ENCODE measurements at regions of chr12 and their contacts with region 1.

Region 1: GRCh38 chr12:47715393-47715876 is 9.6 kb upstream of the RPAP3 start:
- DNase-seq: peak; percentile 74 to 88 (median 82)
- ATAC-seq: peak; percentile 45 to 51 (median 48)
- H3K4me3 ChIP-seq: no peak overlapping the region
- H3K27ac ChIP-seq: peak overlapping the region in 11 of 12 donors; percentile 3 to 95 (median 88)
- H3K4me1 ChIP-seq: peaks cover 7 to 52% (median 44%) of the 10 kb centered on the region in 12 donors
- H3K27me3 ChIP-seq: no peaks in the 10 kb centered on the region
- CTCF ChIP-seq: peak; percentile 73 to 89 (median 80)
- POLR2A ChIP-seq: no peak

Region 2: GRCh38 chr12:47657565-47657964 is 57.9 kb before region 1 on chr12:
- intact Hi-C with region 1: no loop called
- DNase-seq: no peak
- ATAC-seq: no peak
- H3K4me3 ChIP-seq: no peak overlapping the region
- H3K27ac ChIP-seq: no peak overlapping the region
- H3K4me1 ChIP-seq: peaks cover 0 to 4% (median 2%) of the 10 kb centered on the region in 12 donors
- H3K27me3 ChIP-seq: no peaks in the 10 kb centered on the region
- CTCF ChIP-seq: no peak
- POLR2A ChIP-seq: no peak

Region 3: GRCh38 chr12:47734725-47735480 is 19.5 kb after region 1 on chr12:
- intact Hi-C with region 1: loop called in 5 of 10 experiments (anchors 1 to 2 kb)
- DNase-seq: peak in 3 of 5 donors; percentile 37 to 70 (median 66)
- ATAC-seq: peak in 1 of 4 donors; percentile 2
- H3K4me3 ChIP-seq: no peak overlapping the region
- H3K27ac ChIP-seq: peak overlapping the region in 10 of 12 donors; percentile 32 to 91 (median 86)
- H3K4me1 ChIP-seq: peaks cover 29 to 86% (median 65%) of the 10 kb centered on the region in 12 donors
- H3K27me3 ChIP-seq: no peaks in the 10 kb centered on the region
- CTCF ChIP-seq: no peak
- POLR2A ChIP-seq: no peak

Region 4: DNA sequence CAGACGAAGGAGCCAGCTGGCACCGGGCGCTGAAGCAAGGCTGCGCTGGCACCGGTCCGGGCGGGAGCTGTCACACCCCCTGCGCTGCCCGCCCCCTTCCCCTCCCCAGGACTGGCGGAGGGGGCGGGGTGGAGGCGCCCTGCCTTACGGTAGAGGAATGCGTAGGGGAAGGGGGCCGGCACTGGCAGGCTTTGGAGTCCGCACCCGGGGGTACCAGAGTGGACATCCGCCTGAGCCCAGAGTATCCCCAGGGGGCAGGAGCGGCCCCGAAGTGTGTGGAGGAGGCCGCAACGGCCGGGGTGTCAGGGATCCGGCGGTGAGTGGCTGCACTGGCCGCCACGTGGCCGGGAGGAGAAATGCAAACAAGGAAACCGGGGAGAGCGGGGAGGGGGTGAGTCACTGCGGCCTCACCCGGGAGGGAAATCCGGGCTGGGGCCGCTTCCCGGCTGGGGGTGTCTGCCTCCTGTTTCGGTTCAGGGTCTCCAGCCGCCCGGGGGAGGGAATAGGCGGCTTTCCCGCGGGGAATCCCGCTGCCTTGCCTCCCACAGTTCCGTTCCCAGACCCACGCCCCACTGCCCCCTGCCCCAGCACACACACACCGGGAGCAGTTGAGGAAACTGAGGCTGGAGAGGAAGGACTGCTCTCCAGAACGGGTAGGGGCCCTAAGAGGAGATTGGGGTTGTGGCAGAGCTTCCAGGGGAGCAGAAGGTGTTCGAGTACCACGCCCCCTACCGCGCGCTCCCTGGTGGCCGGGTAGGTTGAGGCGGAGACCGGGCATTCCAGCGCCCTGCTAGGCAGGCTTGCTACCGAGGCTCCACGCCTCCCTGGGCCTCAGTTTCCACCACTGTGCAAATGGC is 43.6 kb after region 1 on chr12 and contains the start of gene RAPGEF3:
- intact Hi-C with region 1: loop called in 5 of 10 experiments (anchors 1 to 5 kb)
- DNase-seq: peak; percentile 89 to 93 (median 91)
- ATAC-seq: peak; percentile 76 to 90 (median 88)
- H3K4me3 ChIP-seq: peak within 1 kb of the TSS; percentile 42 to 76 (median 64)
- H3K27ac ChIP-seq: peak within 1 kb of the TSS; percentile 64 to 90 (median 82)
- H3K4me1 ChIP-seq: peaks cover 4 to 70% (median 47%) of the 10 kb centered on the region in 12 donors
- H3K27me3 ChIP-seq: no peaks in the 10 kb centered on the region
- CTCF ChIP-seq: peak; percentile 27 to 62 (median 50)
- POLR2A ChIP-seq: peak in 1 of 2 donors; percentile 7
- total RNA-seq, gene RAPGEF3: 14.5 to 47.8 (median 23.9) TPM

Region 5: DNA sequence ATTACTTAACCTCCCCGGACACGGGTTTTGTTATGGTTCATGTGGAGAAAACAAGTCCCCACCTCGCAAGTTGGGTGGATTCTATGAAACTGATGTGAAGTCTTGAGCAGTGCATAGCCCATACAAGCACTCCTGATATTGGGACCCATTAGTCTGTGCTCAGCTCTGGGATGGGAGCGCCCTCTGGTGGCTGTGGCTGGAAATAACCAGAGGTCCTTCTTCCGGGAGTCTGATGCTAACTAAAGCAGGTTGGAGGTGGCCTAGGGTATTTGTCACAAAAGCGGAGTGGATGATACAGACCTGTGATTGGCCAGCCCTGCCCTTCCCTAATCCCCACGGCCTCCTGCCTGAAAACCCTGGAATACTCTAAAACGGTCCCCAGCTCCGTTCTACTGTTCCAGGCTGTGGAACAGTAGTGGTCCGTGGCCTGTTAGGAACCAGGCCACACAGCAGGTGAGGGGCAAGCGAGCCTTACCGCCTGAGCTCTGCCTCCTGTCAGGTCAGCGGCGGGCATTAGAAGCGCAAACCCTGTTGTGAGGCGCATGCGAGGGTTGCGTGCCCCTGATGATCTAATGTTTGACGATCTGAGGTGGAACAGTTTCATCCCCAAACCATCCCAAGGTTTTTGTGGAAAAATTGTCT is 64.0 kb after region 1 on chr12:
- intact Hi-C with region 1: loop called in 5 of 10 experiments (anchors 1 to 2 kb)
- DNase-seq: peak; percentile 84 to 94 (median 86)
- ATAC-seq: peak; percentile 53 to 80 (median 66)
- H3K4me3 ChIP-seq: no peak overlapping the region
- H3K27ac ChIP-seq: peak overlapping the region in 2 of 12 donors; percentile 12 to 43
- H3K4me1 ChIP-seq: peaks cover under 1 to 61% (median 50%) of the 10 kb centered on the region in 12 donors
- H3K27me3 ChIP-seq: no peaks in the 10 kb centered on the region
- CTCF ChIP-seq: peak; percentile 89 to 98 (median 92)
- POLR2A ChIP-seq: no peak

Region 6: DNA sequence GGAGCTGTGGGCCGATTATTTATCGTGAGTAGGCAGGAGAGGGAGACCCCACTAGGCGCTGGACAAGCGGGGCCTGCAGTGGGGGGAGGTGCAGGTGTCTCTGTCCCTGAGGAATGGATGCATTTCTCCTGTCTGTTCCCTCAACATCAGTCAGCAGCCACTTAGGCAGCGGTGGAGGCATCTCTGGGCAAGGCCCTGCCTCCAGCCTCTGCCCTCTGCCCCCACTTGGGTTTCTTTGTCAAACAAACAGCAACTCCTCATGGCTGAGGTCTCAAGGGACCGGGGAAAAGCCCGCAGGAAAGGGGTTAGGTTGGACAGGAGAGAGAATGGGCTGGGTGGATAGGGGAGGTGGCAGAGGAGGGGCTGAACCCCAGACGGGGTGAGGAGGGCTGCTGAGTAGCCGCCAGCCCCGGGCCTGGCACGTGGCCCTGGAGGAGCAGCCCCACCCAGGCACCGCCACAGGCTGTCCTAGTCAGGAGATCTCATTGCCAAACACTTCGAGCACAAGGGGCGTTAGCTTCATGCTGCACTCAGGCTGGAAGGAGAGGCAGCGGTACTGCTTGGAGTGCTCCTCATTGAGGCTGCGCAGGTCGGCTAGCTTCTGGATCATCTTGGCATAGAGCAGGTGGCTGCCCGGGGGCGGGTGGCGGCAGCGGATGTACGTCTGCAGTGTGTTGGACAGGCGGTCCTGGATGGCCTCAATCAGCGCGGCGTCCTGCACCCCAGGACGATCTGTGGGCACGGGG is 129.0 kb after region 1 on chr12:
- intact Hi-C with region 1: loop called in 4 of 10 experiments (anchors 2 kb)
- DNase-seq: no peak
- ATAC-seq: peak in 2 of 4 donors; percentile 29
- H3K4me3 ChIP-seq: no peak overlapping the region
- H3K27ac ChIP-seq: no peak overlapping the region
- H3K4me1 ChIP-seq: peaks cover 0 to 5% (median 0%) of the 10 kb centered on the region in 12 donors
- H3K27me3 ChIP-seq: no peaks in the 10 kb centered on the region
- CTCF ChIP-seq: no peak
- POLR2A ChIP-seq: no peak

Region 7: DNA sequence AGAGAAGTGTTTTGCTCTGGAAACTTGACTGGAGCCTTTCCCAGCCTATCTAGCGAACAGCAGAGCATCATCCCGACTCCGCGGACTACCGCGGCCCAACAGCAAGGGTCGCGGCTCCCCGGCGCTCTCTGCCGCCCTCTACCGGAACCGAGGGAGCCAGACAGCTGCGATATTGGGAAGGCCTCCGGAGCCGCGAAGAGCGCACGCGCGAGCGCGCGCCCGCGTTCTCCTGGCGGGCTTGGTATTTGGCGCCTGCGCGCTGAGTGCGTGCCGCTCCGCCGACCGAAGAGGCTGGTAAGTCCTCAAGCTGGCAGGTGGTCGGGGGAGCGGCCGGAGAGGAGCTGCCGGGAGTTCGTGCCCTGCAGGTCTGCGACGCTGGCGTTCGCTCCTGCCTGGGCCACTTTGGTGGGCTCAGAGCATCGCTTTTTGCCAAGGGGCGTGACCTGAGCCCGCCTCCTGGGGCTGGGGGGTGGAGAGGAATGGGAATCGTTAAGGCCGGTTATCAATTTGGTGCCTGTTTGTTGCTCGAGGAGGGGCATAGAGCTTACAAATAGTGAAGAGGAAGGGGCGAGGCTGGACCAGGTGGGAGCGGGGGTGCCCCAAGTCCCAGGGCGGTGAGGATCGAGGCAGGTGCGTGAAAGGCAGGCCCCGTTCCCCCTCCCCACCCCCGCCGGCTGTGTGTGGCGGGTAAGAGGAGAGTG is 248.1 kb after region 1 on chr12 and contains the start of gene TMEM106C:
- intact Hi-C with region 1: loop called in 3 of 10 experiments (anchors 10 kb)
- DNase-seq: peak; percentile 89 to 97 (median 92)
- ATAC-seq: peak; percentile 88 to 97 (median 95)
- H3K4me3 ChIP-seq: peak within 1 kb of the TSS; percentile 59 to 91 (median 82)
- H3K27ac ChIP-seq: peak within 1 kb of the TSS in 8 of 12 donors; percentile 14 to 73 (median 56)
- H3K4me1 ChIP-seq: peaks cover 0 to 45% (median 18%) of the 10 kb centered on the region in 12 donors
- H3K27me3 ChIP-seq: no peaks in the 10 kb centered on the region
- CTCF ChIP-seq: peak; percentile 94 to 99 (median 98)
- POLR2A ChIP-seq: no peak
- total RNA-seq, gene TMEM106C: 39.3 to 66.6 (median 50.0) TPM

Measured in heart left ventricle (tissue), 16 donors.